A549 (cell line): ENCODE measurements at regions of chr15 and their contacts with region 1.

Region 1: DNA sequence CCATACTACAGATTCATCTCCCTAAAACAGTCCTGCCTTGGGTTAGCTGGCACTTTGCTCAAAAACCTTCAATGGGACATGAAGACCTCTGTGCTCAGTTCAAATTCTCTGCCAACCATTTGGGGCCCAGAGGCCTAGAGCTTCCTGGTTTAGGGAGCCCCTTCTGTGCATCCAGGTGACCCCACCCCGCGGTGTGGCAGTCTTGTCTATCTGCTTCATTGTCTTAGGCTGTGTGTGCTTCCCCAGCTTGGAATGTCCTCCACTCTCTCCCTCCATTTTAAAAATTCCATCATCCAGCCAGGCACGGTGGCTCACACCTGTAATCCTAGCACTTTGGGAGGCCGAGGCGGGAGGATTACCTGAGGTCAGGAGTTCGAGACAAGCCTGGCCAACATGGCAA is 99.0 kb upstream of the NEO1 start:
- DNase-seq: no peak
- ATAC-seq: no peak
- H3K4me3 ChIP-seq: no peak overlapping the region
- H3K27ac ChIP-seq: no peak overlapping the region
- H3K4me1 ChIP-seq: no peaks in the 10 kb centered on the region
- CTCF ChIP-seq: no peak
- EP300 ChIP-seq: no peak
- POLR2A ChIP-seq: no peak
- RAD21 ChIP-seq: no peak

Region 2: GRCh38 chr15:72865982-72866874 is 87.1 kb before region 1 on chr15:
- CTCF ChIA-PET with region 1: no interaction called
- POLR2A ChIA-PET with region 1: no interaction called
- DNase-seq: no peak
- ATAC-seq: peak in 1 of 2 experiments; percentile 34; a peak in 2 of 6 replicates
- H3K4me3 ChIP-seq: no peak overlapping the region
- H3K27ac ChIP-seq: no peak overlapping the region
- H3K4me1 ChIP-seq: peaks cover 12% of the 10 kb centered on the region; the same call in 1 of the 3 replicates
- CTCF ChIP-seq: no peak
- EP300 ChIP-seq: no peak
- POLR2A ChIP-seq: no peak
- RAD21 ChIP-seq: no peak

Region 3: DNA sequence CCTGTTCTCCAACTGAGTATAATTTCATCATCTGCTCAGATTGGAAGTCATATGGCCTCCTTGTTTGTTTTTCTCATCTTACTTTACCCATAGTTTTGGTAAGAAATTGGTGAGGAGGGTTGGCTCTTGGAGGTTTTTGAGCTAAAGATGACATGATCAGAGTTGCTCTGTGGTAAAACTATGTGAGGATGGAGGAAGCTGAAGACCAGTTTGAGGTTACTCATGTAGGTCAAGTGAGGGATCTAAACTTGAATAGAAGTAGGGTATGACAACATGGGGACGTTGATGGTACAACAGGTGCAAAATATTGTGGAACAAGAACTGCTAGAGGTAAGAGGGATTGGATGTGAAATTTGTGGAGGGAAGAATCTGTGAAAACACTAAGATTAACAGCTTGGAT is 11.2 kb after region 1 on chr15:
- CTCF ChIA-PET with region 1: interaction called, 14 read pairs
- POLR2A ChIA-PET with region 1: no interaction called
- DNase-seq: no peak
- ATAC-seq: no peak
- H3K4me3 ChIP-seq: no peak overlapping the region
- H3K27ac ChIP-seq: no peak overlapping the region
- H3K4me1 ChIP-seq: 0 out of 3 replicates have a peak, but pooled peaks cover 4% of the 10 kb centered on the region
- CTCF ChIP-seq: no peak
- EP300 ChIP-seq: no peak
- POLR2A ChIP-seq: no peak
- RAD21 ChIP-seq: no peak

Region 4: DNA sequence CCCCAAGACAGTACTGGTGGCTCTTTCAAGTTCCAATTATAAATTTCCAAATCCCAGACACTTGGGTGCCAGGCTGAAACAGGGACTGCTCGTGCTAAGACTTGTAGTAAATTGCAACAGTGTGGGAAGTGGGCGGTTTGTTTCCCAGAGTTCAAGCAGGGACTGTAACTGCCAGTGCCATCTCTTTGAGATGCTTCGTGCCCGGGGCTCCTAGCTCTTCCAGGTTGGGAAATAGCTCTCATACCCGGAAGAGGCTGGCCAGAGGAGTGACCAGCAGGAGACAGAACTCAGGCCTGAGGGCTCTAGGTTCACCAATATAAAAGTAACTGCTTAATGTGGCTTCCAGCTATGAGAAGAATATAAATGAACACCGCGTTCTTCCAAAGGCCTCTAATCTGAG is 44.9 kb after region 1 on chr15:
- CTCF ChIA-PET with region 1: no interaction called
- POLR2A ChIA-PET with region 1: no interaction called
- DNase-seq: no peak
- ATAC-seq: peak in 1 of 2 experiments; percentile 58; a peak in 3 of 6 replicates
- H3K4me3 ChIP-seq: no peak overlapping the region
- H3K27ac ChIP-seq: no peak overlapping the region
- H3K4me1 ChIP-seq: no peaks in the 10 kb centered on the region
- CTCF ChIP-seq: no peak
- EP300 ChIP-seq: no peak
- POLR2A ChIP-seq: no peak
- RAD21 ChIP-seq: no peak